ENCODE measurements at regions of chr11 and their contacts with region 1.

Region 1: GRCh38 chr11:134476435-134477021 is 64.5 kb upstream of the B3GAT1 start:
- DNase-seq: peak; percentile 52 to 74
- H3K4me3 ChIP-seq: no peak overlapping the region
- H3K27ac ChIP-seq: no peak overlapping the region
- H3K4me1 ChIP-seq: no peaks in the 10 kb centered on the region
- H3K27me3 ChIP-seq: no peaks in the 10 kb centered on the region
- CTCF ChIP-seq: no peak
- POLR2A ChIP-seq: no peak

Region 2: DNA sequence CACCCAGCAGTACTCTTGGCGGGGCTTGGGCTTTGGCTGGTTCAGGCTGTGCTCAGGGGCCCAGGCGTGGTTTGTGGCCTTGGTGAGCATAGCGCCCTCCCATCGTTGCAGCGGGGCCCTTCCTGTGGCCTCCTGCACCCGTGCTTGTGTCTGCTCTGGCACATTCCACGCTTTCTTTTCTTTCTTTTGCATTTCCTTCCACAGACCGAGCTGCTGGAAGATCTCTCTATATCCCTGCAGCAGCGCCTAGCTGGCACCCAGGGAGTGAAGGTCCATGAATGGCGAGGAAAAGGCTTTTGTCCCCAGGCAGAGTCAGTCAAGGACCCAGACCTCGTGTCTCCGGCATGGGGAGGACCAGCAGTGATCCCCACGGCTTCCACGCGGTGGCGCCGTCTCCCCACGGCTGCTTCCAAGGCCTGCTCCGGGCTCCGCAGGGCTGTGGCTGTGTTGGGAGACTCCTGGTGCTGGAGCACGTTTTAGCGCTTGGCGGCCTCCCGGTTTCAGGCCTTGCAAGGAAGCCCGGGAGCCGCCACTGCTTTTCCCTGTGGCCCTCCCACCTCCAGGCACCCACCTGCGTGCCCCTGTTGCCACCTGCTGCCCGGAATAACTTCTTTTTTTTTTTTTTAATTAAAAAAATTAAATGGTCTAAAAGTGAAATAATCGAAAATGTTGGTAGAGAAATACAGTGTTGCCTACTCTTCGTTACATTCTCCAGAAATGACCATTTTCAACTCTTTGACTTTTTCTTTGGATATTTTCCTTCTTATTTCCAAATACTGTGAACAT is 116.3 kb before region 1 on chr11:
- intact Hi-C with region 1: loop called (anchors 10 kb)
- DNase-seq: peak; percentile 84 to 91
- H3K4me3 ChIP-seq: no peak overlapping the region
- H3K27ac ChIP-seq: no peak overlapping the region
- H3K4me1 ChIP-seq: peaks cover 15 to 46% of the 10 kb centered on the region in 2 donors
- H3K27me3 ChIP-seq: no peaks in the 10 kb centered on the region
- CTCF ChIP-seq: peak; percentile 46 to 97 (median 88)
- POLR2A ChIP-seq: no peak

Region 3: DNA sequence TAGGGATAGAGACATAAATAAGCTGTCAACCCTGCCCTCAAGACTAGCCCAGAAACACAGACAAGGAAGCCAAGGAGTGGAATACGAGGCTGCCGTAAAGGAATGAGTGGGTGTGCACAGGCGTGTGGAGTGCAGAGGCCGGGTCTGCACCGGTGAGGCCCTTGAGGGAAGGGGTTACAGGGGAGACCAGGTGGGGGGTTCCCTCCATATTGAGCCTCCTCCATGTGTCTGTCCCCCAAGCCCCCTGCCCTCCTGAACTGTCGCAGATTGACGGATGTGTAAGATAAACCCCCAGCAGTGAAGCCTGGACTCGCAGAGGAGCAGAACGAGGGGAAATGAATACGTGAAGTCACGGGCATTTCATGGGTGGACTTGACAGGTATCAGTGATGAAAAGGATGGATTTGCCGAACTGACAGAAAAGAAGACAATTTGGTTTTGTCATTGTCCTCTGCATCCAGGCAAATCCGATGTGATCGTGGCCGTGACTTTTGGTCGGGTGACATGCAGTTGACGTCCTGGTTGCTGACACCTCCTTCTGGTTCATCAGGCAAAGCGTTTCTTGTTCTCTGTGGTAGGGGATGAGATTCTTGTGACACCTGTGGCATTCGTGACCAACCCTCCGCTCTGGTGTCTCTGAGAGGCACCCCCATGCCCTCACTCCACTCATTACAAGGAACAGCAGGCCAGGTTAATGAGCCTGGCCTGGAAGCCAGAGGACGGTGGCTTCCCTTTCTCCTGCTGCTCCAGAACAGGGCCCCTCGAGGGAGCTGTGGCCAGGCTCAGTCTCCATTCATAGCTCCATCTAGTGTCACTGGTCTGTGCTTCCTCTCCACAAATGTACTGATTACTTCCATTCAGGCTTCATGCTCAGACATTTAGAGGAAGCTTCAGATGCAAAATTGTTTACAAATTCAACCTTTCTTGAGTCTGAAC is 158.6 kb after region 1 on chr11:
- intact Hi-C with region 1: no loop called
- DNase-seq: no peak
- H3K4me3 ChIP-seq: no peak overlapping the region
- H3K27ac ChIP-seq: no peak overlapping the region
- H3K4me1 ChIP-seq: no peaks in the 10 kb centered on the region
- H3K27me3 ChIP-seq: no peaks in the 10 kb centered on the region
- CTCF ChIP-seq: peak in 1 of 6 experiments; percentile 3
- POLR2A ChIP-seq: no peak